ENCODE measurements at regions of chr11 and their contacts with region 1.

Region 1: GRCh38 chr11:108511851-108512474 is 13.8 kb upstream of the POGLUT3 start:
- DNase-seq: no peak
- ATAC-seq: no peak
- H3K4me3 Mint-ChIP-seq: no peak overlapping the region
- H3K27ac Mint-ChIP-seq: no peak overlapping the region
- H3K4me1 Mint-ChIP-seq: no peaks in the 10 kb centered on the region
- H3K27me3 Mint-ChIP-seq: peaks cover 14% of the 10 kb centered on the region
- CTCF ChIP-seq: no peak

Region 2: DNA sequence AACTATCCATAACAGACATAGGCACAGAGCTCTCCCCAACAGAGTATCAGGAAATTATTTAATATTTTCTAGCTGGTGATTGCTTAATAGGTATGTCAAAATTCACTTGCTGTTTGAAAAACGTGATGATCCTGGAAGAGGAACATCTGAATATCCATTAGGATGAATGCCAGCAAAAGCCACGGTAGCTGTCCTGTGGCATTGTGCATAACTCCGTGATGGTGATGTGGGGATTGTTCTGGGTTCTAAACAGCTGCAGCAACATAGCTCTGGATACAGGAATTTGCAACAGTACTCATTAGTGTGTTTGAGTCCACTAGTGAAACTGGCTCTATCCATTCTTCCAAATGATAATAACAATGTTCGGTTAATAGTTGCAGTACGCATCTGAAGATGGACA is 123.4 kb before region 1 on chr11:
- CTCF ChIA-PET with region 1: no interaction called
- POLR2A ChIA-PET with region 1: no interaction called
- intact Hi-C with region 1: loop called (anchors 5 kb)
- DNase-seq: no peak
- ATAC-seq: no peak
- H3K4me3 Mint-ChIP-seq: no peak overlapping the region
- H3K27ac Mint-ChIP-seq: no peak overlapping the region
- H3K4me1 Mint-ChIP-seq: no peaks in the 10 kb centered on the region
- H3K27me3 Mint-ChIP-seq: no peaks in the 10 kb centered on the region
- CTCF ChIP-seq: no peak